Aorta (tissue), 5 donors: ENCODE measurements at regions of chr2 and their contacts with region 1.

Region 1: GRCh38 chr2:127324635-127325034 is 30.7 kb upstream of the ERCC3 start:
- DNase-seq: no peak
- ATAC-seq: no peak
- H3K4me3 ChIP-seq: no peak overlapping the region
- H3K27ac ChIP-seq: no peak overlapping the region
- H3K4me1 ChIP-seq: no peaks in the 10 kb centered on the region
- H3K27me3 ChIP-seq: no peaks in the 10 kb centered on the region

Region 2: DNA sequence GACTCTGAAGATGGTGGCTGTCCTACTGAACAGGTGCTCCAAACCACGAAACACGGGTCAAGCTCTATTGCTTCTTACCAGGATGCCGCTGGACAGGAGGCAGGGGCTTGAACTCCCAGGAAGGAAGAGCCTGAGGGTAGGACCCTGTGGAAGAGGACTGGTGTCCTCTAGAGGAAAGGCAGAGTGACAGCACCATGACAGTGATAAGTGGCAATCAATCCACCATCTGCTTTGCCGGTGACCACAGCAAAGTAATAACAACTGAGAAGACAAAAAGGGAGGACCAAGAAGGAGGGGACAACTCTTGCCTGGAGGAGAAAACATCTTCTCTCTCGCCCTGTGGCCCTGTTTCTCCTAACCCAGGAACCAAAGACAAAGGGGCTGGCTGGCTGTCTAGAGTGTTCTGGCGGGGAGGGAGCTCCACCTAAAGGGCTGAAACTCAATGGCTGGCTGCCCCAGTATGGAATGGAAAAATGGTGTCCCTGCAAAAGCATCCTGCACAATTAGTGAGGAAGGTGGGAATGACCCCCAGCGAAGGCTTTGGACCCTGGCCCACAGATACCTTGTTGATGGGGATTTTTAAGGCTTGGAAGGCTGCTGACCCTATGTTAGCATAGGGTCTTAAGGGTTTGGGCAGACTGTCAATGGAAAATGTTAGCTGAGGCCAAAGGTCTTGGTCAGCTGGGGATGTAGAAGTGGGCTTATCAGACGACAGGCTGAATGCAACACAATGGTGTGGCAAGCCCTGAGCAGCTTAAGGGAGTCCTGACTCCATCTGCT is 128.9 kb after region 1 on chr2:
- intact Hi-C with region 1: no loop called
- DNase-seq: no peak
- ATAC-seq: no peak
- H3K4me3 ChIP-seq: no peak overlapping the region
- H3K27ac ChIP-seq: no peak overlapping the region
- H3K4me1 ChIP-seq: no peaks in the 10 kb centered on the region
- H3K27me3 ChIP-seq: no peaks in the 10 kb centered on the region

Region 3: GRCh38 chr2:127479219-127479825 is 154.7 kb after region 1 on chr2:
- intact Hi-C with region 1: loop called (anchors 1 to 2 kb)
- DNase-seq: no peak
- ATAC-seq: peak; percentile 67
- H3K4me3 ChIP-seq: no peak overlapping the region
- H3K27ac ChIP-seq: no peak overlapping the region
- H3K4me1 ChIP-seq: no peaks in the 10 kb centered on the region
- H3K27me3 ChIP-seq: no peaks in the 10 kb centered on the region